K562 (cell line): ENCODE measurements at regions of chr9 and their contacts with region 1.

Region 1: GRCh38 chr9:131037335-131038255 is 28.6 kb downstream of the LAMC3 start:
- DNase-seq: peak in 3 of 4 experiments; percentile 63 to 70 (median 65)
- ATAC-seq: peak; percentile 13
- H3K4me3 ChIP-seq: no peak overlapping the region
- H3K27ac ChIP-seq: no peak overlapping the region
- H3K4me1 ChIP-seq: peaks cover 0 to 33% of the 10 kb centered on the region in 2 experiments; a peak in 2 of 5 replicates
- H3K27me3 ChIP-seq: peaks cover 88 to 98% of the 10 kb centered on the region in 2 experiments
- CTCF ChIP-seq: no peak
- EP300 ChIP-seq: no peak
- POLR2A ChIP-seq: no peak
- RAD21 ChIP-seq: no peak

Region 2: DNA sequence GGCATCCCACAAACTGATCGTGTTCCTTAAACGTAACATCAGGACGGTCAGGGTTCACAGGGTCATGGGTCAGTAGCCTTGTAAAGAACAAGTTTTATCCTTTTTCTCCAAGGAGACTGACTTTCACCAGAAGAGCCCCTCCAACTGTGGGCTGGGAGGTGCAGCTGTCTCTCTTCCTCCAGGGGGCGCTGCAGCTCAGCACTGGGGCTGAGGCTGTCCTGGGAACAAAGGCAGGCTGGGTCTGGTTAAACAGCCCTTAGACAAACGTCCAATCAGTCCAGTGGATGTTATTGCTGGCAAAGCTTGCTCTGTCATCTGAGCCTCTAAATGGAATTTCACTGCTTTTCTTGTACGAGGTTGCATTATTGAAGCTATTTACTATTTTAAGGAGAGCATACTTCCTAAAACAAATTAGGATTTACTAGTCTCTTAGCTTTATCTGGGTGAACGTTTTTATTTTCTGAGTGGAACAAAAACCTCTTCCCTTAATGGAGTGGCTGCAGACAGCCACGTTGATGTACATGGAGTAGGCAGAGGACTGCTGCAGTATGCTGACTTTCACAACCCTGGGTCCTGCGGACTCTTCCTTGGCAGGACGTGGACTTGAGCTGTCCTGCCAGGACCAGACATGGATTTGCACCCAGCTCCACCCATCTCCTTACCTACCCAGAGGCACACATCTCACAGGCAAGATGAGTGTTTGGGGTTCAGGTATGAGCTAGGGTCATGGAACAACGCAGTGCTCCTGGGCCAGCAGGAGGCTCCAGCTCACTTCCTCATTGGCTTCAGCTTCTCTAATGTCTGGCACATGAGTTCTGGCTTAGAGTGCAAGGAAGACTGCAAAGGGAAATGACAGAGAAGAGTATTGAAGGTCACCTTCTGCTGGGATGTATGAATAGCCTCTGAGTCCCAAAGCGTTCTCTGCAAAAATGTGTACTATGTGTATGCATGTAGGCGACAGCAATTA is 336.3 kb before region 1 on chr9:
- CTCF ChIA-PET with region 1: no interaction called
- POLR2A ChIA-PET with region 1: no interaction called
- in situ Hi-C with region 1: loop called (anchors 10 kb)
- intact Hi-C with region 1: no loop called
- DNase-seq: peak; percentile 65 to 83 (median 72)
- ATAC-seq: peak; percentile 97
- H3K4me3 ChIP-seq: no peak overlapping the region
- H3K27ac ChIP-seq: no peak overlapping the region
- H3K4me1 ChIP-seq: no peaks in the 10 kb centered on the region; a peak in 1 of 5 replicates
- H3K27me3 ChIP-seq: no peaks in the 10 kb centered on the region
- CTCF ChIP-seq: peak; percentile 88 to 97 (median 89)
- EP300 ChIP-seq: no peak
- POLR2A ChIP-seq: no peak
- RAD21 ChIP-seq: peak; percentile 52 to 74

Region 3: GRCh38 chr9:131008909-131009618 is 28.5 kb before region 1 on chr9 and contains the start of gene LAMC3:
- CTCF ChIA-PET with region 1: no interaction called
- POLR2A ChIA-PET with region 1: interaction called, 23 read pairs
- in situ Hi-C with region 1: no loop called
- intact Hi-C with region 1: no loop called
- DNase-seq: peak; percentile 56 to 67 (median 60)
- ATAC-seq: peak; percentile 23
- H3K4me3 ChIP-seq: no peak within 1 kb of the TSS
- H3K27ac ChIP-seq: no peak within 1 kb of the TSS
- H3K4me1 ChIP-seq: peaks cover 7 to 24% of the 10 kb centered on the region in 2 experiments; a peak in 3 of 5 replicates
- H3K27me3 ChIP-seq: peaks cover 72 to 86% of the 10 kb centered on the region in 2 experiments
- CTCF ChIP-seq: no peak
- EP300 ChIP-seq: no peak
- POLR2A ChIP-seq: no peak
- RAD21 ChIP-seq: no peak
- polyA plus RNA-seq, gene LAMC3: not detected

Region 4: GRCh38 chr9:131018621-131019020 is 19.0 kb before region 1 on chr9:
- CTCF ChIA-PET with region 1: no interaction called
- POLR2A ChIA-PET with region 1: interaction called, 113 read pairs
- in situ Hi-C with region 1: no loop called
- intact Hi-C with region 1: no loop called
- DNase-seq: peak in 1 of 4 experiments; percentile 75
- ATAC-seq: peak; percentile 26
- H3K4me3 ChIP-seq: no peak overlapping the region
- H3K27ac ChIP-seq: no peak overlapping the region
- H3K4me1 ChIP-seq: peaks cover 0 to 14% of the 10 kb centered on the region in 2 experiments; a peak in 1 of 5 replicates
- H3K27me3 ChIP-seq: peaks cover 85 to 95% of the 10 kb centered on the region in 2 experiments
- CTCF ChIP-seq: no peak
- EP300 ChIP-seq: no peak
- POLR2A ChIP-seq: no peak
- RAD21 ChIP-seq: no peak

Region 5: GRCh38 chr9:131186622-131187021 is 149.0 kb after region 1 on chr9:
- CTCF ChIA-PET with region 1: no interaction called
- POLR2A ChIA-PET with region 1: no interaction called
- in situ Hi-C with region 1: no loop called
- intact Hi-C with region 1: no loop called
- DNase-seq: no peak
- ATAC-seq: peak; percentile 6; the same call in 1 of the 3 replicates
- H3K4me3 ChIP-seq: no peak overlapping the region
- H3K27ac ChIP-seq: no peak overlapping the region
- H3K4me1 ChIP-seq: no peaks in the 10 kb centered on the region; a peak in 1 of 5 replicates
- H3K27me3 ChIP-seq: no peaks in the 10 kb centered on the region
- CTCF ChIP-seq: no peak
- EP300 ChIP-seq: no peak
- POLR2A ChIP-seq: no peak
- RAD21 ChIP-seq: no peak